ENCODE measurements at regions of chr9 and their contacts with region 1.

Region 1: DNA sequence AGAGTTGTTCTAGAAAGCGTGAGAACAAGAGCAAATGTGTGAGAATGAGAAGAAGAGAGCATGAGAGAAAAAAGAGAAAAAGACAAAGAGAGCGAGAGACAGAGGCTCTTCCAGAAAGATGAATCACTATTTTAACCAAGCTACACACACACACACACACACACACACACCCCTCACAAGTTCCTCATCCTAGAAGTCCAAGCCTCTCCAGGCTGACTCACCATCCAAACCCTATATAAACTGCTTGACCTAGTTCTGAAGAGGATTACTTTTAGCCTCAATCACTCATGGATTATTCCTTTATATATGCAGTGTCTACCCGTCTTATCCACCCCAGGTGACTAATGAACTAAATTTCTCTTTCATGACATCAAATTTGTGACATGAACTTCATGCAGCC is 37.6 kb downstream of the C9orf57 start:
- DNase-seq: no peak
- H3K4me3 ChIP-seq: no peak overlapping the region
- H3K4me3 Mint-ChIP-seq: no peak overlapping the region
- H3K27ac ChIP-seq: no peak overlapping the region
- H3K27ac Mint-ChIP-seq: peak overlapping the region in 1 of 7 donors; percentile 27
- H3K4me1 ChIP-seq: no peaks in the 10 kb centered on the region
- H3K4me1 Mint-ChIP-seq: no peaks in the 10 kb centered on the region
- H3K27me3 ChIP-seq: no peaks in the 10 kb centered on the region
- H3K27me3 Mint-ChIP-seq: peaks cover 0 to 2% of the 10 kb centered on the region in 2 donors

Region 2: DNA sequence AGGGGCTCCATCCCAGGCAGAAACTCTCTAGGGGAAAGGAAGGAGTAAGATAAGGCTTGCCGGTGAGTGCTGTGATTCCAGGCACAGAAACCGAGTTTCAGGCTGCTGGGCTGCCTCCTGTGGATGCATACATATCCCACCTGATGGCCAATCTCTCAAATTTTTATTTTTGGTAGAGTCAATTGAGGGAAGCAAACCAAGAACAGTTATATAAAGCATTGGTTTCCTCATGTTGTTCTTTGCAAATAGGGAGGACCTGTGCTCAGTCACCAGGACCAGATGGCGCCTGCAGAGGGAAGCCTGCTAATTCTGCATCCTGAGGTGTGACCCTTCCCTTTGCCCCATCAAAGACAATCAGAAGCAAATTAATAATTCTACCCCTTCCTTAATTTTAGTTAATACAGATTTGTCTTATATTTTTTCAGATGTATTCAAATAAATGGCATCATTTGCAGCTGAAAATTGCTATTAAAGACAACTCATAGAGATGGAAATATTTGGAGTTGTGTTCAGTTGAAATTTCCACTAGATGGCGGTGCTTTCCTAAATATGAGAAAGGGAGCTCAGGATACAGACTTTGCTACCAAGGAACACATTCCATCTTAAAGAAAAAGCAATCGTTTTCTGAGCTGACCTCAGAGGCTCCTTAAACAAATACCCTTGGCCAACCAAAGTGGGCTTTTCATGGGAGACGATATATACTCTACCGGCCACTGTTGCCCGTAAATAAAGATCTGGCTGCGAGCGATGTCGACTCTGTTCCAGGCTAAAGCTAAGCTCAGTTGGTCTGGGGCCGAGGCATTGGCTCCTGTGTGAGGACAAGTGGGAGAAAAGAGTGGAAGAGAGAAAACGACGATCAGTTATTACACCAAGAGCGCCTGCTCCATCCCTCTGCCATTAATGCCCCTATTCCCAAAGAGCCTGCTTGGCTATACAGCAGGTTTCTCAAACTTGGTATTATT is 1382.7 kb before region 1 on chr9:
- CTCF ChIA-PET with region 1: interaction called, 5 read pairs
- POLR2A ChIA-PET with region 1: no interaction called
- intact Hi-C with region 1: loop called (anchors 10 kb)
- DNase-seq: peak in 4 of 5 donors; percentile 15 to 40 (median 18)
- H3K4me3 ChIP-seq: no peak overlapping the region
- H3K4me3 Mint-ChIP-seq: no peak overlapping the region
- H3K27ac ChIP-seq: no peak overlapping the region
- H3K27ac Mint-ChIP-seq: no peak overlapping the region
- H3K4me1 ChIP-seq: no peaks in the 10 kb centered on the region
- H3K4me1 Mint-ChIP-seq: no peaks in the 10 kb centered on the region
- H3K27me3 ChIP-seq: no peaks in the 10 kb centered on the region
- H3K27me3 Mint-ChIP-seq: peaks cover 17 to 18% of the 10 kb centered on the region in 2 donors

Region 3: GRCh38 chr9:71285191-71285656 is 737.6 kb before region 1 on chr9:
- CTCF ChIA-PET with region 1: interaction called, 31 read pairs
- POLR2A ChIA-PET with region 1: no interaction called
- intact Hi-C with region 1: no loop called
- DNase-seq: peak; percentile 30 to 45 (median 36)
- H3K4me3 ChIP-seq: no peak overlapping the region
- H3K4me3 Mint-ChIP-seq: no peak overlapping the region
- H3K27ac ChIP-seq: no peak overlapping the region
- H3K27ac Mint-ChIP-seq: no peak overlapping the region
- H3K4me1 ChIP-seq: no peaks in the 10 kb centered on the region
- H3K4me1 Mint-ChIP-seq: no peaks in the 10 kb centered on the region
- H3K27me3 ChIP-seq: no peaks in the 10 kb centered on the region
- H3K27me3 Mint-ChIP-seq: peaks cover 0 to 5% of the 10 kb centered on the region in 2 donors

Region 4: DNA sequence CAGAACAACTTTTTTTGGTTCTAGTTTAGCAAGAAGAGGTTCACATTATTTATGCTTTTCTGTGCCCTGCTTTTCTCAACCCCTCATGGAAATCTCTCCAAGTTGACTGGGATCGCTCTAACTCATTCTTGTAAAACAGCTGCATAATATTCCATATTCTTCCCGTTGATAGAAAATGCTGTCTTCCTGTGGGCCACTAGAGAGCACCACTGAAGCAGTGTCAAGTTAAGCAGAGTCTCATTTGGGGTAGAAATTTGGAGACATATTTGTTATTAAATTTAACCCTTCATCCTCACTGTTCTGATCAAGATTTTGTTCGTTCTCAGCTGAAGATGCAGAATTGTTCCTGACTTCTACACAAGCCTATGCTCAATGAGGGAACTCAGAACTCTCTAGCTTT is 394.6 kb before region 1 on chr9:
- CTCF ChIA-PET with region 1: interaction called, 3 read pairs
- POLR2A ChIA-PET with region 1: no interaction called
- intact Hi-C with region 1: loop called (anchors 1 kb)
- DNase-seq: peak in 4 of 5 donors; percentile 22 to 34 (median 25)
- H3K4me3 ChIP-seq: no peak overlapping the region
- H3K4me3 Mint-ChIP-seq: no peak overlapping the region
- H3K27ac ChIP-seq: no peak overlapping the region
- H3K27ac Mint-ChIP-seq: no peak overlapping the region
- H3K4me1 ChIP-seq: no peaks in the 10 kb centered on the region
- H3K4me1 Mint-ChIP-seq: peaks cover 0 to 2% (median 0%) of the 10 kb centered on the region in 4 donors
- H3K27me3 ChIP-seq: no peaks in the 10 kb centered on the region
- H3K27me3 Mint-ChIP-seq: no peaks in the 10 kb centered on the region

Region 5: GRCh38 chr9:71783120-71783530 is 239.7 kb before region 1 on chr9:
- CTCF ChIA-PET with region 1: interaction called, 40 read pairs
- POLR2A ChIA-PET with region 1: interaction called, 4 read pairs
- intact Hi-C with region 1: no loop called
- DNase-seq: peak; percentile 86 to 95 (median 90)
- H3K4me3 ChIP-seq: no peak overlapping the region
- H3K4me3 Mint-ChIP-seq: peak overlapping the region; percentile 64 to 86 (median 82)
- H3K27ac ChIP-seq: peak overlapping the region; percentile 83
- H3K27ac Mint-ChIP-seq: peak overlapping the region; percentile 93 to 100 (median 99)
- H3K4me1 ChIP-seq: peaks cover 41% of the 10 kb centered on the region
- H3K4me1 Mint-ChIP-seq: peaks cover 36 to 51% (median 40%) of the 10 kb centered on the region in 4 donors
- H3K27me3 ChIP-seq: no peaks in the 10 kb centered on the region
- H3K27me3 Mint-ChIP-seq: no peaks in the 10 kb centered on the region

Region 6: GRCh38 chr9:72038890-72039410 is 16.1 kb after region 1 on chr9:
- CTCF ChIA-PET with region 1: interaction called, 111 read pairs
- POLR2A ChIA-PET with region 1: no interaction called
- intact Hi-C with region 1: no loop called
- DNase-seq: peak; percentile 40 to 53 (median 49)
- H3K4me3 ChIP-seq: no peak overlapping the region
- H3K4me3 Mint-ChIP-seq: peak overlapping the region in 3 of 8 donors; percentile 31 to 49 (median 48)
- H3K27ac ChIP-seq: no peak overlapping the region
- H3K27ac Mint-ChIP-seq: peak overlapping the region in 2 of 7 donors; percentile 34 to 39
- H3K4me1 ChIP-seq: no peaks in the 10 kb centered on the region
- H3K4me1 Mint-ChIP-seq: peaks cover 4 to 6% (median 5%) of the 10 kb centered on the region in 4 donors
- H3K27me3 ChIP-seq: no peaks in the 10 kb centered on the region
- H3K27me3 Mint-ChIP-seq: peaks cover 9 to 12% of the 10 kb centered on the region in 2 donors